ENCODE measurements at regions of chr2 and their contacts with region 1.

Region 1: DNA sequence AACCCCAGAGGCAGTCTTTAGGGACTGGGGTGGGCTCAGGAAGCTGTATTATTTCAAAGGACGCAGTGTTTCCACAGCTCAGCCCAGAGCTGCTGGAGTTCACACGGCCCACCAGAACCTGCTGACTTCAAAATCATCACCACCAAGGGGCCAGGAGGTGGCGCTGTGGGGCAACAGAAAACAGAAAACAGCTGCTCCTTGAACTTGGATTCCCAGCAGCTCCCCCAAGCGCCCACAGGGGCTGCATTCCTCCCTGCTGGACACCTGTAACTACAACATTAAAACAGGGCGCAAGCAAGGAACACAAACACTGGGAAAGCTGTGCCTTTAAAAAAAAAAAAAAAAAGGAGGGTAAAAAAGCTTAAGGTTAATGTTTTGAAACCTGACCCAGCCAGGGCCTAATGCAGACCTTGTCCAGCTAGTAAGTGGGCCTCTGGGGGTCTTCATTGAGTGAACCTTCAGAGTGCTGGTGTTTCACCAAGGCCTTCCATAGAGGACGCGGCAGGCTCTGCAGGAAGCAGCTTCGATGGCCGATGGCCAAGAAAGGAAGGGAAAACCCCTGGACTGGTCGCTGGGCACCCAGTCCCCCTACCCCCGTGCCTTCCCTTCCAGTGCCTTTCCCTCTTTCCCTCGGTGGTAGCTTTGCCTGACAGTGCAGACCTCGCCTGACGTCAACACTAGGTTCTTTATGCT is 25.9 kb downstream of the MLPH start:
- DNase-seq: peak; percentile 80 to 91
- H3K4me3 ChIP-seq: no peak overlapping the region
- H3K27ac ChIP-seq: no peak overlapping the region
- H3K4me1 ChIP-seq: no peaks in the 10 kb centered on the region
- H3K27me3 ChIP-seq: no peaks in the 10 kb centered on the region
- CTCF ChIP-seq: peak; percentile 99

Region 2: GRCh38 chr2:237154082-237154638 is 358.8 kb before region 1 on chr2:
- CTCF ChIA-PET with region 1: no interaction called
- POLR2A ChIA-PET with region 1: interaction called, 3 read pairs
- intact Hi-C with region 1: loop called (anchors 1 kb)
- DNase-seq: peak; percentile 52 to 69
- H3K4me3 ChIP-seq: no peak overlapping the region
- H3K27ac ChIP-seq: no peak overlapping the region
- H3K4me1 ChIP-seq: no peaks in the 10 kb centered on the region
- H3K27me3 ChIP-seq: no peaks in the 10 kb centered on the region
- CTCF ChIP-seq: peak; percentile 90

Region 3: DNA sequence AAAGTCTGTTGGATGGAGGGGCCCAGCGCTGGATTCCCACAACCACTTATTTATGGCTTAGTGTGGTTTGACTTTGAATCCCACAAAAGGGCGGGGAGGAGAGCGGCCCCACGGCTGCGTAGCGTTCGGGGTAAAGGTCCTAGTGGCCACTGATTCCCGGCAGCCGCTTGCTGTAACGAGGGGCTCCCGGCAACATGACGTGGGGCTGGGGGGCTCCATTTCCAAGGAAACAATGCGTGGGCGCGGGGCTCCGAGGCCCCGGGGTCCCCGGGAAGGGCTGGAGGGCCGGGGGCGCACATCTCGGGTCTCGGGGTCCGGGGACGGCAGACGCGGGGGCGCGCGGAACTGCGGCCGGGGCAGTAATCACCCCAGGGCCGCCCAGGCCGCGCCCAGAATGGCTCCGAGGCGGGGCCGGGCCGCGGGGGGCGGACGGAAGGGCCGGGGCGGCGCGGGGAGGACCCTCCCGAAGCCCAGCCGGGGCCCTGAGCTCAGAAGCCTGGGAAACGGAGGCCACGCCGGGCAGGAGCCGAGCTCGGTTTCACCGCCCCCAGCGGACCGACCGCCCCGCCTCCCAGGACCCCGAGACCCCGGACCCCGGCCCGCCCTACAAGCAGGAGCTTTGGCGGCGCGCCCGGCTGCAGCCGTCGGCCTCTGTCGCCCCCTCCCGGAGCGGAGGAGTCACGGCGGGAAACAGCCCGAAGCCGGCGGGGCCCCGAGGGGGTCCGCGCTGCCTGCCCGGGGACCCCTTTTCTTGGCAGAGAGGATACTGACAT is 37.8 kb before region 1 on chr2:
- CTCF ChIA-PET with region 1: interaction called, 22 read pairs
- POLR2A ChIA-PET with region 1: interaction called, 3 read pairs
- intact Hi-C with region 1: loop called (anchors 1 kb)
- DNase-seq: peak; percentile 53 to 90
- H3K4me3 ChIP-seq: peak overlapping the region; percentile 63
- H3K27ac ChIP-seq: peak overlapping the region; percentile 79
- H3K4me1 ChIP-seq: peaks cover 25% of the 10 kb centered on the region
- H3K27me3 ChIP-seq: no peaks in the 10 kb centered on the region
- CTCF ChIP-seq: peak; percentile 97

Region 4: DNA sequence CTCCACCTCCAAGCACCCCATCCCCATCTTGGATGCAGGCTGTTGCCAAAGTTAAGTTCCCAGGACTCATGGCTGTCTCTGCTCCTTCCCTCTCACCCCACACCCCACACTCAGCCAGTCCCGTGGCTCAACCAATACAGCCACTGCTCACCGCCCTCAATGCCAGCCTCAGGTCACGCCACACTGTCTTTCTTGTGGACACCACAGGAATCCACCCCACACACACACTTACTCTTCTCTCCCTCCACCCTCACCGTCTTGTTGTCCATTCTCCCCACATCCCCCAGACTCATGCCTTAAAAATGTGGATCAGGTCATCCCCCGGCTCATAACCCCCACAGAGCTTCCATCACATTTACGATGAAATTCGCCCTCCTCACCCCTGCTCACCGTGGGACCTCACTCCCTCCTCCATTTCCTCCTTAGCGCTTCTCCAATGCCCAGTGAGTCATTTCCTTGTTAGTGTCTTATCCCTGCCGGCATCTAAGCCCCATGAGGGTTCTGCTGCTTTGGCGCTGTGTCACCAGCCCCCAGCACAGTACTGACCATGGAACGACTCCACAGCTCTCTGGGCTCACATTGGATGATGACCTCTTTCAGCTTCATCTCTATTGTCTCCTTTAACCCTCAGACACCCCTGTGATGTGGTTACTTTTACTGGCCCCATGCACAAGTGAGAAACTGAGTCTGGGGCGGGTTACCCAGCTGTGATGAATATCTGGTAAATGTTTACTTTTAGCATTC is 12.1 kb before region 1 on chr2:
- CTCF ChIA-PET with region 1: interaction called, 19 read pairs
- POLR2A ChIA-PET with region 1: no interaction called
- intact Hi-C with region 1: no loop called
- DNase-seq: peak; percentile 95 to 100
- H3K4me3 ChIP-seq: peak overlapping the region; percentile 21; the same call in 1 of the 2 replicates
- H3K27ac ChIP-seq: peak overlapping the region; percentile 93
- H3K4me1 ChIP-seq: peaks cover 68% of the 10 kb centered on the region
- H3K27me3 ChIP-seq: no peaks in the 10 kb centered on the region
- CTCF ChIP-seq: no peak

Region 5: GRCh38 chr2:237650455-237650850 is 137.5 kb after region 1 on chr2:
- CTCF ChIA-PET with region 1: interaction called, 10 read pairs
- POLR2A ChIA-PET with region 1: no interaction called
- intact Hi-C with region 1: no loop called
- DNase-seq: peak; percentile 96 to 97
- H3K4me3 ChIP-seq: no peak overlapping the region
- H3K27ac ChIP-seq: no peak overlapping the region
- H3K4me1 ChIP-seq: peaks cover 19% of the 10 kb centered on the region
- H3K27me3 ChIP-seq: no peaks in the 10 kb centered on the region
- CTCF ChIP-seq: no peak

Region 6: GRCh38 chr2:237749961-237750360 is 237.0 kb after region 1 on chr2:
- CTCF ChIA-PET with region 1: interaction called, 11 read pairs
- POLR2A ChIA-PET with region 1: no interaction called
- intact Hi-C with region 1: no loop called
- DNase-seq: no peak
- H3K4me3 ChIP-seq: no peak overlapping the region
- H3K27ac ChIP-seq: no peak overlapping the region
- H3K4me1 ChIP-seq: peaks cover 3% of the 10 kb centered on the region; the same call in 1 of the 2 replicates
- H3K27me3 ChIP-seq: no peaks in the 10 kb centered on the region
- CTCF ChIP-seq: no peak

Region 7: DNA sequence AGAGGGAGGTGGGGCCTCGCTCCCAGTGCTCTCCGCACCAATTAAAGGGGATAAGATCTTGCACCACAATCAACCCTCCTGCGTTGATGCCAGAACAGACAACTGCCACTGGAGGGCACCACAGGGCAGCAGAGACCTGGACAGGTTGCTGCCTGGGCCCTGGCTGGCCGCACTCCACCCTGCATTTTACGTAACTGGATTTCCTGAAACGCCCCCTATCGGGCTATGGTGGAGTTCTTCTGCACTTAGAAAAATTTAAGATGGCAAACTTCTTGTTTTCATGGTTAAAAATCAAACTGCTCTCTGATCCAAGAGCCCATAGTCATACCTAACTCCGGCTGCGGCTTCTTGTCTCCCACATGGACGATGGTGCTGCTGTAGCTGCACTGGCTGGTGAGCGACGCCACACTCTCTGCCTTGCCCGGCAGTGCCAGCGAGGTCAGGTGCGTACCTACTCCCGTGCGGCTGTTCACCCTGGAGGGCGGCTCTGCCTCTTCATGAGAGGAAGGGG is 743.7 kb after region 1 on chr2:
- CTCF ChIA-PET with region 1: no interaction called
- POLR2A ChIA-PET with region 1: no interaction called
- intact Hi-C with region 1: loop called (anchors 10 kb)
- DNase-seq: peak; percentile 84 to 96
- H3K4me3 ChIP-seq: no peak overlapping the region
- H3K27ac ChIP-seq: no peak overlapping the region
- H3K4me1 ChIP-seq: 0 out of 2 replicates have a peak, but pooled peaks cover 5% of the 10 kb centered on the region
- H3K27me3 ChIP-seq: no peaks in the 10 kb centered on the region
- CTCF ChIP-seq: peak; percentile 99

Measured in PC-9 (cell line).